ENCODE measurements at regions of chr3 and their contacts with region 1.

Region 1: GRCh38 chr3:123799544-123800361 is 84.4 kb downstream of the MYLK start:
- DNase-seq: peak; percentile 89
- ATAC-seq: peak; percentile 93
- H3K4me3 ChIP-seq: peak overlapping the region; percentile 62 to 80 (median 67)
- H3K27ac ChIP-seq: peak overlapping the region; percentile 87
- H3K4me1 ChIP-seq: peaks cover 52% of the 10 kb centered on the region
- H3K27me3 ChIP-seq: no peaks in the 10 kb centered on the region
- CTCF ChIP-seq: 0 out of 2 replicates have a peak, but pooled peaks have one; percentile 6
- EP300 ChIP-seq: peak in 1 of 2 experiments; percentile 73; a peak in 1 of 4 replicates
- POLR2A ChIP-seq: peak; percentile 48 to 65; a peak in 3 of 4 replicates
- RAD21 ChIP-seq: no peak

Region 2: DNA sequence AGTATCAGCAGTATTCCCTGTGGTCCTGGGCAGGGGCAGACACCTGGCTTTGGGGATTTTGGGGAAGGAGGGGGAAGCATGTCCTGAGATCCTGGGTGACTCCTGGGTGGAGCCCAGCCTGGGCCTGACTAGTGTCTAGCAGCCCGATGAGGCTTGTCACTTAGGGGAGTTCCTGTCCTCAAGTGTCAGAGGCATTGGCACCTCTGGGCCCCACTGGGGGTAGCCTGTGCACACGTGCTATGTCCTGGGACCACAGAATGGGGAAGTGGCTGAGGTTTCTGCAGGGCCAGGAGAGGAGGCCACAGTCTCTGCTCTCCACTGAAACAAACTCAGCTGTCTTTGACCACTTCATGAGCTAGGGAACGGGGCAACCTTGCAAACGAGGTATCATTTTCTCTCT is 319.3 kb before region 1 on chr3:
- CTCF ChIA-PET with region 1: no interaction called
- POLR2A ChIA-PET with region 1: no interaction called
- in situ Hi-C with region 1: no loop called
- intact Hi-C with region 1: no loop called
- DNase-seq: no peak
- ATAC-seq: no peak
- H3K4me3 ChIP-seq: no peak overlapping the region
- H3K27ac ChIP-seq: no peak overlapping the region
- H3K4me1 ChIP-seq: no peaks in the 10 kb centered on the region
- H3K27me3 ChIP-seq: peaks cover 2 to 40% of the 10 kb centered on the region in 2 experiments; a peak in 3 of 5 replicates
- CTCF ChIP-seq: no peak
- EP300 ChIP-seq: no peak
- POLR2A ChIP-seq: no peak
- RAD21 ChIP-seq: no peak

Region 3: DNA sequence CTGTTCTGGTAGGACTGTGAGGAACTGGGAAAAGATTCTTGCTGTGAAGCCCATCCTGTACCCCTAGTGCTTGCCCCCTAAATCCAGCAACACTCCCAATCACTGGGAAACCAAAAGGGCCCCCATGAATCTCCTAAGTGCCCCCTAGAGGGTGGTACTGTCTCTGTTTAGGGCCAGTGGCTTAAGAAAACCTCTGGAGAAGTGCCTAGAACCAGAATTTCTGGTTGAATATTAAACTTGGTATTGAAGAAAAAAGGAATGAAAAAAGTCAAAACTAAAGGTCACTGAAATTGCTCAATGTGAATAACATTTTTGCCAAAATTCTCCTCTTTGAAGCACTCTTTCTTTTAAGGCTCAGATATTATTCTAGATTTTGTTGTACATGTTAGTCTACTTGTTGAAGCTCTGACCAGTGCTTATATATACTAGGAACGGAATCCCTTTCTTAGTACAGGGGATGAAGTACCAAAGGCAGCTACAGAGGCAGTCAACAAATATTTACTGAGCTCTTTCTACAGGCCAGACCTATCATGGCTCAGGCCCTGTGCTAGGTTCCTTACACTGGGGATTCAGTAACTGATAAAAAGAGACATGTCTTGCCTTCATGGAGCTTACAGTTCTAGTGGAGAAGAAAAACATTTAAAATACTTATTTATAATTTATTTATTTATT is 54.4 kb before region 1 on chr3:
- CTCF ChIA-PET with region 1: no interaction called
- POLR2A ChIA-PET with region 1: interaction called, 12 read pairs
- in situ Hi-C with region 1: no loop called
- intact Hi-C with region 1: loop called (anchors 2 kb)
- DNase-seq: peak; percentile 44
- ATAC-seq: peak; percentile 84
- H3K4me3 ChIP-seq: no peak overlapping the region
- H3K27ac ChIP-seq: peak overlapping the region; percentile 30
- H3K4me1 ChIP-seq: peaks cover 19% of the 10 kb centered on the region
- H3K27me3 ChIP-seq: no peaks in the 10 kb centered on the region
- CTCF ChIP-seq: peak; percentile 67
- EP300 ChIP-seq: no peak
- POLR2A ChIP-seq: no peak
- RAD21 ChIP-seq: peak; percentile 65

Region 4: DNA sequence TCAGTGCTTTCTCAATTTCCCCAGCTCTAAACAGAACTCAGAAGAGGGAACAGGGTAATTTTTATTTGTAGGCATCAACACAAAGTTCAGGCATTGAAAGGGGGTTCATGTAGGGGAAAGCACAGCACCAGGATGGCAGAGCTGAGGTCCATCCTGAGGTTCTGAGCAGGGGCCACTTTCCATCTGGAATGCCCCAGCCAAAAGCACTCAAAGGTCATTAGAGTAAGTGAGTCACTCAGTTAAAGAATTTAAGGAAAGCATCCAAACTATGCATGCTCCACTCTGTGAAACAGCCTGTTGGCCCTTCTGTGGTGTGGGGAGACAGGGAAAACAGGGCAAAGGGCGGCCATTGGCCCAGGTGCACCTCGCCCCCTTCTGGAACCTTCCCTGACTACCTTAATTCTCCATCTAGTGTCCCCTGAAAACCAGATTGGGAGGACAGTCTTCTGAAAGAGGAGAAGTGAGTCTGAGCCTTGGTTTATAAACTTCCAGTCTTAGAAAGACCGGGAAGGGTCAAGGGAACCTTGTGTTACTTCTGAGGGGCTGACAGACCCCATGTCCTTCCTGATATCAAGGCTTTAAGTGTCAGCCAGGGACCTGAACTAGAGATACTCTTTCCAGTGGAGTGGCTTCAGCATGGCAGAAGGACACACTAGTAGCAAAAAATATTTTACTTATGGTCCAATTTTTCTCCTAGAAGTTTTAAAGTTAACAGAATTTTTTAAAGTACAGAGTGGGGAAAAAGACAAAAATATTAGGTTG is 48.9 kb before region 1 on chr3:
- CTCF ChIA-PET with region 1: no interaction called
- POLR2A ChIA-PET with region 1: interaction called, 27 read pairs
- in situ Hi-C with region 1: loop called (anchors 5 kb)
- intact Hi-C with region 1: loop called (anchors 1 kb)
- DNase-seq: peak; percentile 93
- ATAC-seq: peak; percentile 80
- H3K4me3 ChIP-seq: no peak overlapping the region
- H3K27ac ChIP-seq: peak overlapping the region; percentile 76
- H3K4me1 ChIP-seq: peaks cover 67% of the 10 kb centered on the region
- H3K27me3 ChIP-seq: no peaks in the 10 kb centered on the region
- CTCF ChIP-seq: peak; percentile 58
- EP300 ChIP-seq: peak; percentile 68 to 79; a peak in 3 of 4 replicates
- POLR2A ChIP-seq: no peak
- RAD21 ChIP-seq: 0 out of 2 replicates have a peak, but pooled peaks have one; percentile 51

Region 5: GRCh38 chr3:123757281-123757940 is 42.3 kb before region 1 on chr3:
- CTCF ChIA-PET with region 1: no interaction called
- POLR2A ChIA-PET with region 1: interaction called, 27 read pairs
- in situ Hi-C with region 1: loop called (anchors 5 kb)
- intact Hi-C with region 1: loop called (anchors 1 kb)
- DNase-seq: no peak
- ATAC-seq: no peak
- H3K4me3 ChIP-seq: no peak overlapping the region; a peak in 1 of 6 replicates
- H3K27ac ChIP-seq: peak overlapping the region; percentile 90
- H3K4me1 ChIP-seq: peaks cover 89% of the 10 kb centered on the region
- H3K27me3 ChIP-seq: no peaks in the 10 kb centered on the region
- CTCF ChIP-seq: no peak
- EP300 ChIP-seq: no peak
- POLR2A ChIP-seq: no peak
- RAD21 ChIP-seq: no peak

Region 6: GRCh38 chr3:123880998-123881561 is 81.3 kb after region 1 on chr3:
- CTCF ChIA-PET with region 1: no interaction called
- POLR2A ChIA-PET with region 1: interaction called, 4 read pairs
- in situ Hi-C with region 1: no loop called
- intact Hi-C with region 1: loop called (anchors 1 kb)
- DNase-seq: peak; percentile 40
- ATAC-seq: peak; percentile 49
- H3K4me3 ChIP-seq: no peak overlapping the region
- H3K27ac ChIP-seq: no peak overlapping the region
- H3K4me1 ChIP-seq: peaks cover 10% of the 10 kb centered on the region
- H3K27me3 ChIP-seq: peaks cover 0 to 25% of the 10 kb centered on the region in 2 experiments; a peak in 2 of 5 replicates
- CTCF ChIP-seq: peak; percentile 66
- EP300 ChIP-seq: no peak
- POLR2A ChIP-seq: no peak
- RAD21 ChIP-seq: 0 out of 2 replicates have a peak, but pooled peaks have one; percentile 28